Mammary epithelial cell (primary cell): ENCODE measurements at regions of chr4 and their contacts with region 1.

Region 1: GRCh38 chr4:108372681-108373080 is 203.9 kb upstream of the LEF1 start:
- DNase-seq: no peak
- H3K4me3 ChIP-seq: no peak overlapping the region
- H3K27ac ChIP-seq: no peak overlapping the region
- H3K4me1 ChIP-seq: no peaks in the 10 kb centered on the region
- H3K27me3 ChIP-seq: peaks cover 17% of the 10 kb centered on the region
- CTCF ChIP-seq: no peak

Region 2: DNA sequence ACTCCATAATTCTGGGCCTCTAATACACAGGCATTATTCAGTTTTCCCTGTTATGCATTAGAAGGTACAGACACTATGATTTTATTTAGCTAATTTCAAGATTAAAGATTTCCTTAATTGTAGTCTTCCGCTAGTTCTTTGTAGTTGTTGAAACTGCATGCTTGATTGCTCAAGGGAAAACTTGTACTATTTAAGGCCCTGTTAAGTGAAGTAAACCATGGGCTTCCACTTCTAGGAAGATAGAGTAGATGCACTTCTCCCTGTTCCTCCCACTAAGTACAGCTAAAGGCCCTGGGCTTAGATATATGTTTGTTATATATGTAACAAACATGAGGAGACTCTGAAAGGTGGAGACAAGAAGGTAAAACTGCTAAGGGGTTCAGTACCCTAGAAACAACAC is 11.9 kb after region 1 on chr4:
- CTCF ChIA-PET with region 1: no interaction called
- dilution Hi-C with region 1: no loop called
- in situ Hi-C with region 1: no loop called
- intact Hi-C with region 1: loop called (anchors 1 kb)
- DNase-seq: no peak
- H3K4me3 ChIP-seq: no peak overlapping the region
- H3K27ac ChIP-seq: no peak overlapping the region
- H3K4me1 ChIP-seq: no peaks in the 10 kb centered on the region
- H3K27me3 ChIP-seq: peaks cover 10% of the 10 kb centered on the region
- CTCF ChIP-seq: no peak

Region 3: DNA sequence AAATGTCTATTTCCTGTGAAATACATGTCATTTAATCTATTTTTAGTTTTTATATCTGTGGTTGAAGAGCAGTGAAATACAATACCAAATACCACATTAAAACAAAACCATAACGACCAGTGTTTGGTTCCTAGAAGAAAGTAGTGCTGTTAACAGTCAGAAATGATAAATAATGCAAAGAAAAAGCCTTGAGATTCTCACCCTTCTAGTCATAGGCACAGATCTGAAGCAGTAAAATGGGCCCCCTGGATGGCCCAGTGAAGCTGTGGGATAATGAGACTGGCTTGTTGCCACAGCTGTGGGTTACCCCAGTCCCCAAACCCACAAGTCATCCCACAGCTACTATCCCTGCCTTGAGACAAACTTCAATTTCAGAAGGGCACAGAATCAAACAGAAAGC is 110.4 kb after region 1 on chr4:
- CTCF ChIA-PET with region 1: no interaction called
- dilution Hi-C with region 1: no loop called
- in situ Hi-C with region 1: no loop called
- intact Hi-C with region 1: no loop called
- DNase-seq: no peak
- H3K4me3 ChIP-seq: no peak overlapping the region
- H3K27ac ChIP-seq: no peak overlapping the region
- H3K4me1 ChIP-seq: no peaks in the 10 kb centered on the region
- H3K27me3 ChIP-seq: peaks cover 2% of the 10 kb centered on the region
- CTCF ChIP-seq: no peak